AG04450 (cell line): ENCODE measurements at regions of chr4 and their contacts with region 1.

Region 1: GRCh38 chr4:54971474-54971950 is 153.9 kb downstream of the KDR start:
- DNase-seq: peak; percentile 4
- H3K4me3 ChIP-seq: no peak overlapping the region
- H3K27ac ChIP-seq: no peak overlapping the region
- H3K27me3 ChIP-seq: no peaks in the 10 kb centered on the region
- CTCF ChIP-seq: peak; percentile 77

Region 2: DNA sequence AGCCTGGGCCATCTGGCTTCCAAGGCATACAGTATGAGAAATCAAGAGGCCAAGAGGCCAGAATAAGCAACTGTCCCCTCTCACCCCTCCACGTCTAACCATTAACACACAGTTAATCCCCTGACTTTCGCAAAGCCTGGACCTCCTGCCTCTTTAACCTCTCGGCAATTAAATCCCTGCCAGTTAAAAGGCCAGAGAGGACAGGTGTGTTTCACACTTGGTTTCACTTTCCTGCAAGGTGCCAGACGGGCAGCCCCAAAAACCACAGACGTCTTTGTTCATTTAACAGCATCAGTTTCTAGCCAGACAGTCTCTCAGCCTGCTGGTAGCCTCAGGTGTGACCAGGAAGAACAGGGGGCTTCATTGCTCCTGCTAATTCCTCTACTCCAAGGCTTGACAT is 404.9 kb before region 1 on chr4:
- CTCF ChIA-PET with region 1: no interaction called
- POLR2A ChIA-PET with region 1: no interaction called
- DNase-seq: no peak
- H3K4me3 ChIP-seq: no peak overlapping the region
- H3K27ac ChIP-seq: no peak overlapping the region
- H3K27me3 ChIP-seq: no peaks in the 10 kb centered on the region
- CTCF ChIP-seq: no peak

Region 3: DNA sequence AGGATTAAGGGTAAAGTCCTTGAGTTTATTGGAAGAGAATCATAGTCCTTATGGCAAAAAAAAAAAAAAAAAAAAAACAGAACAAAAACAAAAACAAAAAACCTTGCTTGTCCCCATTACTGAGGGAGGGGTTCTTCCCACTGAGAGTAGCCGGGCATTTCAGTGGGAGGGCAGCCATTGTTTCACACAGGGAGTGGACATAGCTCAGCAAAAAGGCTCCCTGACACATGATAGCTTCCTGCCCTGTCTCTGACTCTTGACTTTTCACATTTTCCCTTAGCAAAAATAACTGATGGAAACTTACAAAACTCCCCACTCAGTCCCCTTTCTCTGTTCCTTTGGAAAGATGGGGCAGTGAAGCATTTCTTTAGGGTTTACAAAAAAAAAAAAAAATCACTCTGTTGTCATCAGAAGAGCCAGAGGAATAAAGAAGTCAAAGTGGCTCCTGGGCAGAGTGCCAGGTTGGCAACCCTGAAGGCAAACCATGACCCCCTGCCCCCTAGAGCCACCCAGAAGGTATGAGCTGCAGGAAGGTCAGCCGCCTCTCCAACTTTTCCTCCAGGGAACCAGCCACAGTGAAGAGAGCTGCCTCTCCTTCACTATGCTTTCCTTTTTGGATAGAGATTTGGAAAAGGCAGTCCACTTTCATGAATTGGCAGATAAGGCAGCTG is 16.7 kb before region 1 on chr4:
- CTCF ChIA-PET with region 1: interaction called, 47 read pairs
- POLR2A ChIA-PET with region 1: no interaction called
- DNase-seq: no peak
- H3K4me3 ChIP-seq: no peak overlapping the region
- H3K27ac ChIP-seq: no peak overlapping the region
- H3K27me3 ChIP-seq: no peaks in the 10 kb centered on the region
- CTCF ChIP-seq: no peak

Region 4: DNA sequence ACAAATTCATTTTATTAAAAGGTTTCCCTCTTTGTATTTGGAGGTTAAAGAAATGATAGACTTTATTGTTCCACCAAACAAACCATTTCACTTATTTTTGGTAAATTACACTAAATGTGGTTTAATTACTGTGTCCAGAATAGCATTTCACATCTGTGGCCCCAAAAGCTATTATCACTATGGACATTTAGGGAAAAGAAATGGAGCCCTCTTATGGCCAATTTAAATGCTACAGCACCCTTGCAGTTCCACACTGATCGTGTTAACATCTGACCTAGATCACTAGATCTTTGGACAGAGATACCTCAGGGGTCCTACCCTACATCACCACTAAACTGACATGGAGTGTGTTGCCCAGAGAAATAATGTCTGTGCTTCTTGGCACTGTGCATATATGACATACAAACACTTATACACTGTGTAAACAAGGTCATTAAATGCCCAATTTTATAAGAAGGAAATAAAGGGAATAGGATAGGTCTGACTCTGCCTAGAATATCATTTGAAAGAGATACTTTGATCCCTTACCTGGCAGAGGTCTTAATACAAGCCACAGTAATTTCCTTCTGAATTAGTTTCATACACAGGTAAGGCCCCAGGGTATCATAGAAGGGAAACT is 10.0 kb before region 1 on chr4:
- CTCF ChIA-PET with region 1: interaction called, 47 read pairs
- POLR2A ChIA-PET with region 1: no interaction called
- DNase-seq: no peak
- H3K4me3 ChIP-seq: no peak overlapping the region
- H3K27ac ChIP-seq: no peak overlapping the region
- H3K27me3 ChIP-seq: no peaks in the 10 kb centered on the region
- CTCF ChIP-seq: peak; percentile 58

Region 5: GRCh38 chr4:54992266-54992665 is 20.8 kb after region 1 on chr4:
- CTCF ChIA-PET with region 1: interaction called, 16 read pairs
- POLR2A ChIA-PET with region 1: no interaction called
- DNase-seq: no peak
- H3K4me3 ChIP-seq: no peak overlapping the region
- H3K27ac ChIP-seq: no peak overlapping the region
- H3K27me3 ChIP-seq: no peaks in the 10 kb centered on the region
- CTCF ChIP-seq: no peak

Region 6: GRCh38 chr4:55184600-55185523 is 213.3 kb after region 1 on chr4:
- CTCF ChIA-PET with region 1: interaction called, 12 read pairs
- POLR2A ChIA-PET with region 1: no interaction called
- DNase-seq: peak; percentile 26
- H3K4me3 ChIP-seq: no peak overlapping the region
- H3K27ac ChIP-seq: peak overlapping the region; percentile 95
- H3K27me3 ChIP-seq: no peaks in the 10 kb centered on the region
- CTCF ChIP-seq: peak; percentile 23; the same call in 1 of the 2 replicates

Region 7: GRCh38 chr4:55312489-55313101 is 341.1 kb after region 1 on chr4:
- CTCF ChIA-PET with region 1: interaction called, 208 read pairs
- POLR2A ChIA-PET with region 1: no interaction called
- DNase-seq: no peak
- H3K4me3 ChIP-seq: no peak overlapping the region
- H3K27ac ChIP-seq: no peak overlapping the region
- H3K27me3 ChIP-seq: peaks cover 2% of the 10 kb centered on the region
- CTCF ChIP-seq: peak; percentile 86

Region 8: GRCh38 chr4:55321707-55322264 is 350.3 kb after region 1 on chr4:
- CTCF ChIA-PET with region 1: interaction called, 208 read pairs
- POLR2A ChIA-PET with region 1: no interaction called
- DNase-seq: no peak
- H3K4me3 ChIP-seq: no peak overlapping the region
- H3K27ac ChIP-seq: no peak overlapping the region
- H3K27me3 ChIP-seq: peaks cover 3% of the 10 kb centered on the region
- CTCF ChIP-seq: peak; percentile 69